ENCODE measurements at regions of chr10 and their contacts with region 1.

Region 1: DNA sequence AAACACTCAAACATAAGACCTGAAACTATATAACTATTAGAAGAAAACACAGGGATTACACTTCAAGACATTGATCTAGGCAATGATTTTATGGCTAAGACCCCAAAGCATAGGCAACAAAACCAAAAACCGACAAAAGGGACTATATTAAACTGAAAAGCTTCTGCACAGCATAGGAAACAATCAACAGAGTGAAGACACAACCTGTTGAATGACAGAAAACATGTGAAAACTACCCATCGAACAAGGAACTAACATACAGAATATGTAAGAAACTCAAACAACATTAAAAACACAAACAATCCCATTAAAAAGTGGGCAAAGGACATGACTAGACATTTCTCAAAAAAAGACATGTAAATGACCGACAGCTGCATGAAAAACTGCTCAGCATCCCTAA is 109.0 kb downstream of the ALOX5 start:
- DNase-seq: no peak
- H3K4me3 ChIP-seq: no peak overlapping the region
- H3K27ac ChIP-seq: no peak overlapping the region
- H3K4me1 ChIP-seq: no peaks in the 10 kb centered on the region
- H3K27me3 ChIP-seq: no peaks in the 10 kb centered on the region
- CTCF ChIP-seq: no peak
- POLR2A ChIP-seq: no peak

Region 2: DNA sequence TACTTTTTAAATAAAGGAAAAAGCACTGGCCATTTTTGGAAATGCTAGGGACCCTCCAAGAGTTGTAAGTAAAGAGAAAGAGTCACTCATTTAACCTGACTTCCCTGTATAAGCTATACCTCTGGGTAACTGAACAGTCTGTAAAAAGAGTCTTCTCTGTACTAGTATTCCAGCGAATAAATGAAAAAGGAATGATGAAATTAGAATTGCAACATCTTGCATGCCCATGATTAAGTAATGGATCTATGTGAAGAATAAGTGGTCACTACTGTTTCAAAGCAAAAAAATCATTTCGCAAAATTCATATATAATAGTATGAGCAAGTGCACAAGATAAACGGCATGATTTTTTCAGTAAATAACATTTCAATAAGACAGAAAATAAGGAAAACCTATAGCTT is 72.8 kb after region 1 on chr10:
- CTCF ChIA-PET with region 1: no interaction called
- POLR2A ChIA-PET with region 1: no interaction called
- dilution Hi-C with region 1: no loop called
- intact Hi-C with region 1: no loop called
- DNase-seq: no peak
- H3K4me3 ChIP-seq: no peak overlapping the region
- H3K27ac ChIP-seq: no peak overlapping the region
- H3K4me1 ChIP-seq: peaks cover 36% of the 10 kb centered on the region
- H3K27me3 ChIP-seq: no peaks in the 10 kb centered on the region
- CTCF ChIP-seq: no peak
- POLR2A ChIP-seq: no peak

Region 3: DNA sequence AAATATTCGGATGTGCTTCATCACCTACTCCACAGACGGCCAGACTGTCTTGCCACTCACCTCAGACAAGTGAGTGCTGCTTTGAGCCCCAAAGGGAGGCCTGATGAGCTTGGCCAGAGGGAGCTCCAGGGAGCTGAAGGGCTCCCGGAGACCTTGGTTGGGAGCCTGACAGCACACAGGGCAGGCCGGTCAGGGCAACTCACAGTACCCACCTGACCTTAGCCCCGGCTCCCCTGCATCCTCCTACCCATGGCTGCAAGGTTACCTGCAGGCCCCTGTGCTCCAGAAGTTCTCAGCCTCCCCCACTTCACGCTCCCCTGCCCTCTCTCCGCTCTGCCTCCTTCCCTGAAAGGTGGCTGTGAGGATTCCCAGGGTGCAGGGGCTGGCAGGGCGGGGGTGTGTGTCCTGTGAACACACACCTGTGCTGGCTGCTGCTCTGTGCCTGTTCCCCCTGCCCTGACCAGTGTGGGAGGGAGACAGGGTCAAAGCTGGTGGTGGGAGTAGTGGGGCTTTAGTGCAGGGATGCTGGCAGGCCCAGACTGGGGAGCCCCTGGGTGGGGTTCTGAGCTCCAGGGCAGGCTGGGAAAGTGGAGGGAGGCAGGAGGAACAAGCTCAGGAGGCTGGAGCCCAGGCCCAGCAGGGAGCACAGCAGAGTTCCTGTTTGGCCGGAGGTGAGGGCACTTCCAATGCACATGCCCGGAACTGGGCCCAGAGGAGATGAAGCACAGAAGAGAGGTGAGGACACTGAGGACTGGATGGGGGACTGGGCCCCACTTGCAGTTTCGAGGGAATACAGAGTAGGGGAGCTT is 811.0 kb after region 1 on chr10:
- CTCF ChIA-PET with region 1: no interaction called
- POLR2A ChIA-PET with region 1: no interaction called
- dilution Hi-C with region 1: no loop called
- intact Hi-C with region 1: loop called (anchors 5 kb)
- DNase-seq: no peak
- H3K4me3 ChIP-seq: no peak overlapping the region
- H3K27ac ChIP-seq: no peak overlapping the region
- H3K4me1 ChIP-seq: no peaks in the 10 kb centered on the region
- H3K27me3 ChIP-seq: no peaks in the 10 kb centered on the region
- CTCF ChIP-seq: no peak
- POLR2A ChIP-seq: no peak

Measured in endothelial cell of umbilical vein (primary cell).